Caco-2 (cell line): ENCODE measurements at regions of chr4 and their contacts with region 1.

Region 1: DNA sequence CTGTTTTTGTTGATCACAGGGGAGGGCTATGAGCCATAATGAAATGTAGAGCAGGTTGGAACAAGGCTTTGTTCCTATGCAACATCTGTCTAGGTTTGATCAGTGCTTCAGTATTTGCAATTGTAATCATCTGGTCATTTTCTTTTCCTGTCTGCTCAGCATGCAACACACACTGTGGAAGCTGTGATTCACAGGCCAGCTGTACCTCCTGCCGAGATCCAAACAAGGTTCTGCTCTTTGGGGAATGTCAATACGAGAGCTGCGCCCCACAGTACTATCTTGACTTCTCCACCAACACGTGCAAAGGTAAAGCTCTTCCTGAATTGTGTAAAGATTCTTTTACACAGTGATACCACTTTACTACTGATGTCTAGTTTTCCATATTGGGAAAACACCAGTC is 181.9 kb upstream of the ANXA3 start:
- DNase-seq: no peak
- H3K4me3 ChIP-seq: no peak overlapping the region
- H3K4me3 Mint-ChIP-seq: no peak overlapping the region
- H3K27ac Mint-ChIP-seq: no peak overlapping the region
- H3K4me1 ChIP-seq: peaks cover 20% of the 10 kb centered on the region
- H3K4me1 Mint-ChIP-seq: no peaks in the 10 kb centered on the region
- H3K27me3 ChIP-seq: no peaks in the 10 kb centered on the region
- H3K27me3 Mint-ChIP-seq: no peaks in the 10 kb centered on the region
- CTCF ChIP-seq: no peak

Region 2: GRCh38 chr4:78149751-78150542 is 219.7 kb before region 1 on chr4:
- CTCF ChIA-PET with region 1: no interaction called
- POLR2A ChIA-PET with region 1: no interaction called
- intact Hi-C with region 1: loop called (anchors 2 kb)
- DNase-seq: no peak
- H3K4me3 ChIP-seq: no peak overlapping the region
- H3K4me3 Mint-ChIP-seq: peak overlapping the region; percentile 40
- H3K27ac Mint-ChIP-seq: no peak overlapping the region
- H3K4me1 ChIP-seq: peaks cover 27% of the 10 kb centered on the region
- H3K4me1 Mint-ChIP-seq: peaks cover 29% of the 10 kb centered on the region
- H3K27me3 ChIP-seq: no peaks in the 10 kb centered on the region
- H3K27me3 Mint-ChIP-seq: no peaks in the 10 kb centered on the region
- CTCF ChIP-seq: no peak

Region 3: DNA sequence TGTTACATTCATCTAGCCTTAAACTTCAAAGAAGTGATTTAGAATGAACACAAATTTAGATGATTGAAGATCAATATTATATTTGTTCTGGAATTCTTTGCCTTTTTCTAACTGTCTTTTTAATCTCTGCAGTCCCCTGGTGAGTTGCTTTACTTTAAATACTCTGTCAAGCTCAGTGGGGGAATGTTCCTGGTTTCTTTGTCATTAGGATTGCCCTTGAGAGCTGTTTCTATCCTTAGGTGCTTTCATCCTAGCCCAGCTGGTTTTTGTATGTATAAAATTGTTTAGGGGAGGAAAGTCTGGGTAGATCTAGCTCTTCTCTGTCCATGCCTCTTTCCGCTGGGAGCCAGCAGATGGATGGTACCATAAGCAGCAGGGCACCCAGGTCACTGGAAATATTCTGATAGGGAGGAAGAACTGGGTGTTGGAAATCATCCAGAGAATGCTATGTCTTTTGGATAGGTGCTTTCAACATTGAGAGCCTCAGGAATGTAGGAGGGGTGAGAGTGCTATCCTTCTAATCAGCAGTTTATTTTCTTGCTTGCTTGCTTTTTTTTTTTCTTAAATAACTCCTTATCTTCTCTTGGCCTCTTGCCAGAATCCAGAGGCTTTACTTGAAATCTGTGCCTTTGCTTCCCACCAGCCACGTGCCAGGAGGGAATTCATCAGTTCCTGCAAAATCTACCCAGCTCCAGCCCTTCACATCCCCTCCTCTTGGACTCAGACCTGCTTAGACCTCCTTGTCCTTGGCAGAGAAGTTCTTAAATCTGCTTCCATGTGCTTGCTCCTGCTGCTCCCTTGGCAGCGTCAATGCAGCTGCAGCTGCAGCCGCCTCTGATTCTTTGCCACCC is 33.4 kb before region 1 on chr4:
- CTCF ChIA-PET with region 1: no interaction called
- POLR2A ChIA-PET with region 1: no interaction called
- intact Hi-C with region 1: loop called (anchors 5 kb)
- DNase-seq: peak in 1 of 2 experiments; percentile 27
- H3K4me3 ChIP-seq: no peak overlapping the region
- H3K4me3 Mint-ChIP-seq: no peak overlapping the region
- H3K27ac Mint-ChIP-seq: no peak overlapping the region
- H3K4me1 ChIP-seq: peaks cover 30% of the 10 kb centered on the region
- H3K4me1 Mint-ChIP-seq: peaks cover 37% of the 10 kb centered on the region
- H3K27me3 ChIP-seq: no peaks in the 10 kb centered on the region
- H3K27me3 Mint-ChIP-seq: no peaks in the 10 kb centered on the region
- CTCF ChIP-seq: no peak

Region 4: GRCh38 chr4:78720994-78721677 is 351.5 kb after region 1 on chr4:
- CTCF ChIA-PET with region 1: no interaction called
- POLR2A ChIA-PET with region 1: no interaction called
- intact Hi-C with region 1: no loop called
- DNase-seq: no peak
- H3K4me3 ChIP-seq: no peak overlapping the region
- H3K4me3 Mint-ChIP-seq: no peak overlapping the region
- H3K27ac Mint-ChIP-seq: no peak overlapping the region
- H3K4me1 ChIP-seq: no peaks in the 10 kb centered on the region
- H3K4me1 Mint-ChIP-seq: no peaks in the 10 kb centered on the region
- H3K27me3 ChIP-seq: no peaks in the 10 kb centered on the region
- H3K27me3 Mint-ChIP-seq: no peaks in the 10 kb centered on the region
- CTCF ChIP-seq: no peak